ENCODE measurements at regions of chr16 and their contacts with region 1.

Region 1: GRCh38 chr16:78607486-78607885 is 508.0 kb downstream of the WWOX start:
- DNase-seq: no peak
- ATAC-seq: peak in 7 of 8 donors; percentile 43 to 80 (median 49)
- H3K4me3 ChIP-seq: no peak overlapping the region
- H3K27ac ChIP-seq: peak overlapping the region in 2 of 10 donors; percentile 48 to 74
- H3K4me1 ChIP-seq: peaks cover 0 to 31% (median 15%) of the 10 kb centered on the region in 9 donors
- H3K27me3 ChIP-seq: no peaks in the 10 kb centered on the region
- CTCF ChIP-seq: no peak

Region 2: DNA sequence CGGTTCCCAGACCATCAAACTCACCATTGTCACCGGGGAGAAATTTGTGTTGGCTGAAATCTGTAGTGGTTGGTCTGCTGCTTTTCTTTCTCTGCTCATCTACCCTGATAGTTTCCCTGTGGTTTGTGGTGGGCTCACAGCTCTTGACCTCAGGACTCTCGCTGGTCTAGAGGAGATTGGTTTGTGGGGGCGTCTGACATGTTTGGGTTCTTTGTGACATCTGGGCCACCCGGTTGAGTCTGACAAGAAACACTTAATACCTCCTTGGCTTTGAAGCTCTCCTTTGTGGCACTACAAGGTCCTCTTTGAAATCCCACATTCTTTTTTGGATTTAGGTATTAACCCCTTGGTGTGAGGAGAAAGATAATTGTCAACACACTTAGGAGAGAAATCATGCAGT is 153.9 kb after region 1 on chr16:
- intact Hi-C with region 1: loop called in 1 of 10 experiments (anchors 10 kb)
- DNase-seq: no peak
- ATAC-seq: no peak
- H3K4me3 ChIP-seq: no peak overlapping the region
- H3K27ac ChIP-seq: no peak overlapping the region
- H3K4me1 ChIP-seq: peaks cover 0 to 6% (median 0%) of the 10 kb centered on the region in 9 donors
- H3K27me3 ChIP-seq: no peaks in the 10 kb centered on the region
- CTCF ChIP-seq: no peak

Measured in heart right ventricle (tissue), 16 donors.